ENCODE measurements at regions of chr4 and their contacts with region 1.

Region 1: DNA sequence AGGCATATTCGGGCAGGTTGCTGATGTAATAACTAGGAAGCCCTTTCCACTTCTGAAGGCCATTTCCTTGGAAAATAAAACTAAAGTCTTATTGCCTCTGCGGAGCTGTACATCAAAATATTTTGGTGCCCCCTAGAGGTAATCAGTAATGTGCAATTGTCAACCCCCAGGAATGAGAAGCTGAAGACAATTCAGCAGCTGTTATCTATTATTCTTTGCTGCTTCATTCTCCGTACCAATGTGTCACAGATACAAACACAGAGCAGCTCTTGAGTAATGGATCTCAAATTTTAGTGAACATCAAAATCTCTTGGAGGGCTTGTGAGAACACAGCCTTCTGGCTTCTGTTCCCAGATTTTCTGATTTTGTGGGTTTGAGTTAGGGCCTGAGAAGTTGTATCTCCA is 3.5 kb upstream of the SLIT2 start:
- DNase-seq: no peak
- ATAC-seq: no peak
- H3K4me3 ChIP-seq: no peak overlapping the region
- H3K4me3 Mint-ChIP-seq: no peak overlapping the region
- H3K27ac ChIP-seq: no peak overlapping the region
- H3K27ac Mint-ChIP-seq: no peak overlapping the region
- H3K4me1 ChIP-seq: no peaks in the 10 kb centered on the region
- H3K4me1 Mint-ChIP-seq: peaks cover 0 to 16% (median 13%) of the 10 kb centered on the region in 7 donors
- H3K27me3 ChIP-seq: no peaks in the 10 kb centered on the region
- H3K27me3 Mint-ChIP-seq: peaks cover 20 to 31% (median 28%) of the 10 kb centered on the region in 5 donors

Region 2: DNA sequence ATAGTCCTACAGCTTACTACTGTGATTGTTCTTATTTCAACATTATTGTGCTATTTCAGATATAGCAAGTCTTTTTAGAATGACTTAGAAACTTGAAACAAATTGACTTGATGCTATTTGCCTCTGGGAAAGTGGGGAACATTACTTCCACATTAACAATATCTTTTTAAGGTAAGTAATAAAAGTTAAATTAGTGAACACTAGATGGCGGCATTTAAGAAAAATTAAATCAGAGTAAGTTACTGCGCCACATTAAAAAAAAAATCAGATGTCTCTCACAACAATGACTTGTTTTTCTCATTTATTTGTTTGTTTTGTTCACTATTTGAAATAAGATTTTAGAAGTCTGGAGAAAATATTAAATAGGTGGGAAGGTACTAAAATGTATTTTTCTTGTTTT is 1023.3 kb before region 1 on chr4:
- CTCF ChIA-PET with region 1: no interaction called
- POLR2A ChIA-PET with region 1: no interaction called
- intact Hi-C with region 1: loop called in 1 of 2 experiments (anchors 10 kb)
- DNase-seq: no peak
- ATAC-seq: no peak
- H3K4me3 ChIP-seq: no peak overlapping the region
- H3K4me3 Mint-ChIP-seq: no peak overlapping the region
- H3K27ac ChIP-seq: no peak overlapping the region
- H3K27ac Mint-ChIP-seq: no peak overlapping the region
- H3K4me1 ChIP-seq: no peaks in the 10 kb centered on the region
- H3K4me1 Mint-ChIP-seq: no peaks in the 10 kb centered on the region
- H3K27me3 ChIP-seq: no peaks in the 10 kb centered on the region
- H3K27me3 Mint-ChIP-seq: no peaks in the 10 kb centered on the region